Lower leg skin (tissue), 4 donors: ENCODE measurements at regions of chr20 and their contacts with region 1.

Region 1: DNA sequence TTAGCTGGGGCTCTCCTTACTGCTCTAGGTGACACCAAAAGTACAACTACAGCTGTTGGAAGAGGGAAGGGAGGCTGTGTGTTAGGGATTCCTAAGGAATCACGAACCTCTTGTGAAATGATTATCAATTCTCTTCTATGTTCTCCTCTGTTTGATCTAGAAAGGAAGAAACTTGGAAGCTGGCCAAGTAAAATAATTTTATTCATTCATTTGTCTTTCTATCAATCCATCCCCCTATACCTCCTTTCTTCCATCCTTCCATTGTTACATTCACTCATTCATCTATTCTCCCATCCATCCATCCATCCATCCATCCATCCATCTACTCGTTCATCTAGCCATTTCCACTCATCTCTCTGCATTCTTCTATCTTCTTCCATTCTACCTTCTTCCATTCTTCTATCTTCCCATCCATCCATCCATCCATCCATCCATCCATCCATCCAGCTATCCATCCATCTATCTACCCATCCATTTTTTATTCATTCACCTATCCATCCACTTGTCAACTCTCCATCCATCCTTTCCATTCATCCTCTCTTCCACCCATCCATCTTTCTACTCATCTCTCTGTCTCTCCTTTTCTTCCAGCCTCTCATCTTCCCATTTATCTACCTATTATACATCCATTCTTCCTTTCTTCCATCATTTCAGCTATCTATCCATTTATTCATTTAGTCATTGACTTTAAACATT is 52.8 kb upstream of the ZNFX1 start:
- DNase-seq: no peak
- H3K4me3 ChIP-seq: no peak overlapping the region
- CTCF ChIP-seq: no peak
- POLR2A ChIP-seq: no peak

Region 2: GRCh38 chr20:49381558-49382493 is 51.1 kb after region 1 on chr20:
- intact Hi-C with region 1: no loop called
- DNase-seq: peak; percentile 62 to 93
- H3K4me3 ChIP-seq: no peak overlapping the region
- CTCF ChIP-seq: no peak
- POLR2A ChIP-seq: no peak

Region 3: GRCh38 chr20:49484180-49485140 is 153.8 kb after region 1 on chr20:
- intact Hi-C with region 1: loop called (anchors 5 kb)
- DNase-seq: peak; percentile 51 to 90
- H3K4me3 ChIP-seq: no peak overlapping the region
- CTCF ChIP-seq: no peak
- POLR2A ChIP-seq: no peak

Region 4: DNA sequence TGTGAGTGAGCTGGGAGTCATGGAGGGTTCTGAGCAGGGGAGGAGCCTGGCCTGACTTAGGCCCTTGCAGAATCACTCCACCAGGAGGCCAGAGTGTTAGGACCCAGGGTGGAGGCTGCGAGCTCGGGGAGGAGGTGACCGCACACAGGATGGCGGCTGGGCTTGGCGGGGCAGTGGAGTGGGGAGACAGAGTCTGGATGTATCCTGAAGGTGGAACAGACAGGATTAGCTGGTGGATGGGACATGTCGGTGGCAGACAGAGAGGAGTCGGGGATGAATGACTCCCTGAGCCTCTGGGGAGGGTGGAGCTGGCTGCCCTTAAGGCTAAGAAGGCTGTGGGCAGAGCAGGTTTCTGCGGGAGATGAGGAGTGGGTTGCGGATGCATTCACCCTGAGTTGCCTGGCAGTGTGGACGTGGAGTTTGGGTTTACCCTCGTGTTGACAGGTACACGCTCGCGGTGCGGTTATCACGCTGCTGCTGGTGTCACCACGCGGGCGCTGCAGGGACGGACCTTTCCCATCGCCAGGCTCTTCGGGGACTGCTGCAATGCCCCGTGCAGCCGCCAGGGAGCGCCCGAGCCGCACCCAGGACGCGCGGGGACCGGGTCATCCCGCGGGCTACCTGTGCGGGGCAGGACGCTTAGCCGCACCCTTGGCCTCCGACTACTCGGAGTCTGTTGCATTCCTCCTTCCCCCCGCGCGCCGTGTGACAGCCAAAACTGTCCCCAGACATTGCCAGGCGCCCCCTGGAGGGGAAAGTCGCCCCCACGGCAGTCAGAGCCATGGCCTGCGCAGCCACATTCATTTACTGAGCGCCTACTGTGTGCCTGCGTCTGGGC is 280.2 kb after region 1 on chr20:
- intact Hi-C with region 1: loop called (anchors 5 kb)
- DNase-seq: peak; percentile 57 to 94
- H3K4me3 ChIP-seq: no peak overlapping the region
- CTCF ChIP-seq: peak in 2 of 3 donors; percentile 94 to 98
- POLR2A ChIP-seq: no peak